Posterior cingulate gyrus (tissue), 11 donors: ENCODE measurements at regions of chr11 and their contacts with region 1.

Region 1: GRCh38 chr11:9384535-9385303 is at the start of gene IPO7:
- DNase-seq: peak; percentile 88 to 99 (median 94)

Region 2: DNA sequence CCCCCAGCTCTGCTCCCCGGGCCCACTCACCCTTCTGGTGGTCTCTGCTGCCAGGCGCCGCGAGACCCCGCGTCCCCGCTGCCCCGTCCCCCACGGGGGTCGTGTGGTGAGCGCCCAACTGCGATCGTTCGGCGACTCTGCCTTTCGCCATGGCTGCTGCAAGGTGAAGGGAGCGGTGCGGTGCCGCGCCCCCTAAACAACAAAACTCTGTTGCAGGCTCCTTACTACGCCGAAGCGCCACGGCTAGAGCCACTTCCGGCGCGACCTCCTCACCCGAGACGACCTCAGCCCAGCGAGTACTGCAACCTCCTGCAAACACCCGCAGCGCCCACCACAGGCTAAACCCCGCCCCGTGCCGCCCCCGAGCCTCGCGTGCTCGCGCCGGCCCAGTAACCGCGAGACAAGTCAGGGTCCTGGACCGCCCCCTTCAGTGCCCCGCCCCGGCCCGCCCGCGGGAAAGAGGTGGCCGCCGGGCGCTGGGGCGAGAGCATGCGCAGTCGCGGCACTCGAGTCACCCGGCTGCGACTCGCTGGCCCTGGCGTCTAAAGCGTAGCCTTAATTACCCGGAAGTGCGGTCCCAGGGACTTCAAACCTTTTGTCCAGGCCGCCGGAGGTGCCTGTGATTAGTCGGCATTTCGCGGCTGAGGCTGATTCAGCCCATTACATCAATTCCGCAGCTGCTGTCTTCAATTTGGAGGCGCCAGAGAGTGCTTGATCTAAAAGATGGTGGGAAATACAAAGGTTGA is 70.3 kb before region 1 on chr11 and contains the start of gene TMEM41B:
- intact Hi-C with region 1: loop called (anchors 2 kb)
- DNase-seq: peak; percentile 93 to 100 (median 97)

Region 3: GRCh38 chr11:9347100-9347499 is 37.6 kb before region 1 on chr11:
- intact Hi-C with region 1: no loop called
- DNase-seq: no peak

Region 4: GRCh38 chr11:9460322-9461067 is 75.8 kb after region 1 on chr11 and contains the start of gene ZNF143:
- intact Hi-C with region 1: loop called (anchors 5 kb)
- DNase-seq: peak; percentile 99 to 100 (median 100)